Mammary epithelial cell (primary cell): ENCODE measurements at regions of chr9 and their contacts with region 1.

Region 1: GRCh38 chr9:76458903-76459690 is at the start of gene GCNT1:
- DNase-seq: peak; percentile 95
- H3K4me3 ChIP-seq: peak within 1 kb of the TSS; percentile 89 to 98 (median 97)
- H3K27ac ChIP-seq: peak within 1 kb of the TSS; percentile 95
- H3K4me1 ChIP-seq: peaks cover 14% of the 10 kb centered on the region
- H3K27me3 ChIP-seq: no peaks in the 10 kb centered on the region
- CTCF ChIP-seq: peak; percentile 2 to 49
- total RNA-seq, gene GCNT1: 39.8 to 97.0 TPM

Region 2: GRCh38 chr9:76562511-76562911 is 103.4 kb after region 1 on chr9:
- CTCF ChIA-PET with region 1: no interaction called
- dilution Hi-C with region 1: no loop called
- in situ Hi-C with region 1: no loop called
- intact Hi-C with region 1: loop called (anchors 5 kb)
- DNase-seq: peak; percentile 81
- H3K4me3 ChIP-seq: no peak overlapping the region
- H3K27ac ChIP-seq: peak overlapping the region; percentile 65
- H3K4me1 ChIP-seq: peaks cover 42% of the 10 kb centered on the region
- H3K27me3 ChIP-seq: no peaks in the 10 kb centered on the region
- CTCF ChIP-seq: no peak

Region 3: GRCh38 chr9:76651119-76651705 is 192.1 kb after region 1 on chr9:
- CTCF ChIA-PET with region 1: no interaction called
- dilution Hi-C with region 1: no loop called
- in situ Hi-C with region 1: loop called in 1 of 2 experiments (anchors 5 kb)
- intact Hi-C with region 1: loop called (anchors 1 kb)
- DNase-seq: no peak
- H3K4me3 ChIP-seq: no peak overlapping the region
- H3K27ac ChIP-seq: no peak overlapping the region
- H3K4me1 ChIP-seq: peaks cover 25% of the 10 kb centered on the region
- H3K27me3 ChIP-seq: no peaks in the 10 kb centered on the region
- CTCF ChIP-seq: no peak